AG04450 (cell line): ENCODE measurements at regions of chr10 and their contacts with region 1.

Region 1: DNA sequence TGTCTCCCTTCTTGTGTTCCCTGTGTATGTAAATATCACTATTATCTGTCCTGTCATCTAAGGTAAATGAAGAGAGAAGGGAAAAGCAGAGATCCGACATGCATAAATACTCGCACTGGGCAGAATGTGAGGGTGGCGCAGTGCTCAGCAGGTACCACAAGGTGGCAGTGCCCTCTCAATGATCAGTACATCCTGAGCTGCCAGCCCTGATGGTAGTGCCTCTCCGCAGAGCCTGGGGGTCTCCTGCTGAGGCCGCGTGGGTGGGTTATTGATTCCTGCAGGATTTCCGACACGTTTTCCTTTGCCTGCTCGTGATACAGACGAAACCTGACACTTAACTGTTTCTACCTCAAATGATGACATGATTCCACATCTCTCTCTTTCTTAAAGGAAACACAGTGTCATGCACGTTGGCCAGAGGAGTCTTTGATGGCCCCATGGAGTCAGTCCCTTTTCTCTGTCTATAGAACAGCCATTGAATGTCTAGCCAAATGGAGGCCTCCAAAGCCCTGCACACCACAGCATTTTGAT is 19.8 kb downstream of the RGR start:
- DNase-seq: peak; percentile 32
- H3K4me3 ChIP-seq: no peak overlapping the region
- H3K27ac ChIP-seq: no peak overlapping the region
- H3K27me3 ChIP-seq: peaks cover 10% of the 10 kb centered on the region
- CTCF ChIP-seq: peak; percentile 98

Region 2: DNA sequence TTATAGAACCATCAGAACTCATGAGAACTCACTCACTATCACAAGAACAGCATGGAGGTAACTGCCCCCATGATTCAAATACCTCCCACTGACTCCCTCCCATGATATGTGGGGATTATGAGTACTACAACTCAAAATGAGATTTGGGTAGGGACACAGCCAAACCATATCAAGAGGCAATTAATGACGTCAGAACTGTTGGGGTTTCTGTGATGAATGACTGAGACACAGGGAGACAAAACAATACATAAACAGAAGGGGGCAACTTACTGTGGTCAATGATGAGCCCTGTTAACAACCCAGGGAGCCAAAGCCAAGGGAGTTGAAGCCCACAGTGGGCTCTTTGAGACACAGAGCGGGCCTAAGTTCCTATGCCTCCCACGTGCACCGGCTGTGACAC is 296.6 kb before region 1 on chr10:
- CTCF ChIA-PET with region 1: no interaction called
- POLR2A ChIA-PET with region 1: no interaction called
- DNase-seq: no peak
- H3K4me3 ChIP-seq: no peak overlapping the region
- H3K27ac ChIP-seq: no peak overlapping the region
- H3K27me3 ChIP-seq: no peaks in the 10 kb centered on the region
- CTCF ChIP-seq: no peak

Region 3: GRCh38 chr10:84310470-84310869 is 45.8 kb after region 1 on chr10:
- CTCF ChIA-PET with region 1: interaction called, 10 read pairs
- POLR2A ChIA-PET with region 1: interaction called, 4 read pairs
- DNase-seq: no peak
- H3K4me3 ChIP-seq: no peak overlapping the region
- H3K27ac ChIP-seq: peak overlapping the region; percentile 11
- H3K27me3 ChIP-seq: no peaks in the 10 kb centered on the region
- CTCF ChIP-seq: no peak

Region 4: DNA sequence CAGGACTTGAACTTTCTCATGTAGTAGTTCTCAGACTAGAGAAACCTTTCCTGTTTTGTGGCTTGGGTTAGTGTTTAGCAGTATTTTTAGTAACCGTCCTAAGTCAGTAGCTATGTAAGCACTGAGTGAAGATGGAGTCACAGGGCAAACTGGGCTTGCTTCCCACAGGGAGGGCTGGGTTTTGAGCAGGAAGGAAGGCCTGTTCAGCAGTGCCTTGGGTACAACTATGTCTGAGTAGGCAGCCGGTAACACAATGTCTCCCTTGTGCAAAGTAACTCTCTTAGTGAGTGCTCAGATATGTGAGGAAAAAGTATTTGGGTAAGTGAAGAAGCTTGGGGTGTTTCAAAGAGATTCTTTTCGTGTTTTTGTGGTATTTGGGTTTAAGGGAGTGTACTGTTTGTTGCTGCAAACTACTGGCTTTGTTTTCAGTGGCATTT is 160.1 kb after region 1 on chr10:
- CTCF ChIA-PET with region 1: interaction called, 10 read pairs
- POLR2A ChIA-PET with region 1: no interaction called
- DNase-seq: peak; percentile 89
- H3K4me3 ChIP-seq: peak overlapping the region; percentile 51
- H3K27ac ChIP-seq: peak overlapping the region; percentile 71
- H3K27me3 ChIP-seq: no peaks in the 10 kb centered on the region
- CTCF ChIP-seq: no peak

Region 5: GRCh38 chr10:84447701-84448400 is 183.2 kb after region 1 on chr10:
- CTCF ChIA-PET with region 1: no interaction called
- POLR2A ChIA-PET with region 1: no interaction called
- DNase-seq: no peak
- H3K4me3 ChIP-seq: no peak overlapping the region
- H3K27ac ChIP-seq: no peak overlapping the region
- H3K27me3 ChIP-seq: no peaks in the 10 kb centered on the region
- CTCF ChIP-seq: no peak

Region 6: GRCh38 chr10:84531396-84531795 is 266.7 kb after region 1 on chr10:
- CTCF ChIA-PET with region 1: interaction called, 427 read pairs
- POLR2A ChIA-PET with region 1: no interaction called
- DNase-seq: no peak
- H3K4me3 ChIP-seq: no peak overlapping the region
- H3K27ac ChIP-seq: no peak overlapping the region
- H3K27me3 ChIP-seq: no peaks in the 10 kb centered on the region
- CTCF ChIP-seq: no peak

Region 7: DNA sequence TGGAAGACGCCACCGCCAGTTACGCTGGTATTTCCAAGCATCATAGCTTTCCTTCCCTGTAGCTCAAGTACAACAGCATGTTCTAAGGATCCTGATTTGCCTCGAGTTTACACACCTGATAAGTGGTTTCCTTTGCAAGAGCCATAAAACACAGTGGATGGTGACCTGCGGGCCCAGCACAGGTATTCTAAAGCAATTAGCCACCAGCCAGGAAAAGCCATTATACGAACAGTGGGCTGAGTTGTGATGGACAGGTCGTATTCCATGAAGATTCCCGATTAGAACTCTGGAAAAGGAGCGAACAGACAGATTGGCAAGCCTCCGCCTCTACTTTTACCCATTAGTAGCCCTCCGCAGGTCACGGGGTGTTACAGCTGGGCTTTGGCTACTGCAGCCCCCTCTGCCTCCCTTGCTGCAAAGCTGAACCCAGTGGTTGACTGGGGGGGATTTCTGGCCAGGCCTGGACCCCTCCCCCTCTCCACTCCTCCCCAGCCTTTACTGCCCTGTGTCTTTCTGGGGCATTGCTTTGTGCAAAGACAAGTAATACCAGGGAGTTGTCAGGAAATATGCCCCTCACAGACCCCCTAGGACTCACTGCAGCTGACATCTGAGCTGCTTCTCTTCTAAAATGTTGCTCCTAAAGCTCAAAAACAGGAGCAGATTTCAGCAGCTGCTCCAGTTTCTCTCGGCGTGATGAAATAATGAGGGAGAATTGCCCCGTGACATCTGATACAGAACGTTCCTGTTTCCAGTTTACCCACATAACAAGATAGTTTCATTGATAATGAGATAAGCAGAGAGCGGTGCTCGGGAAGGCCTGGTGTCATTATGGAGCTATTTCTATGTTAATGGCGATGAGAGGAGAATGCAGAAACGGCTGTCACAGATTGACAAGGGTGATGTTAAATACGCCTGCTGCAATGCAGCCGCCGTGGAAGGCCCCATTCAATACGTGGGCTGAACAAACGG is 278.1 kb after region 1 on chr10:
- CTCF ChIA-PET with region 1: interaction called, 427 read pairs
- POLR2A ChIA-PET with region 1: no interaction called
- DNase-seq: no peak
- H3K4me3 ChIP-seq: no peak overlapping the region
- H3K27ac ChIP-seq: no peak overlapping the region
- H3K27me3 ChIP-seq: peaks cover 5% of the 10 kb centered on the region
- CTCF ChIP-seq: no peak